Gastrocnemius medialis (tissue), 4 donors: ENCODE measurements at regions of chr5 and their contacts with region 1.

Region 1: DNA sequence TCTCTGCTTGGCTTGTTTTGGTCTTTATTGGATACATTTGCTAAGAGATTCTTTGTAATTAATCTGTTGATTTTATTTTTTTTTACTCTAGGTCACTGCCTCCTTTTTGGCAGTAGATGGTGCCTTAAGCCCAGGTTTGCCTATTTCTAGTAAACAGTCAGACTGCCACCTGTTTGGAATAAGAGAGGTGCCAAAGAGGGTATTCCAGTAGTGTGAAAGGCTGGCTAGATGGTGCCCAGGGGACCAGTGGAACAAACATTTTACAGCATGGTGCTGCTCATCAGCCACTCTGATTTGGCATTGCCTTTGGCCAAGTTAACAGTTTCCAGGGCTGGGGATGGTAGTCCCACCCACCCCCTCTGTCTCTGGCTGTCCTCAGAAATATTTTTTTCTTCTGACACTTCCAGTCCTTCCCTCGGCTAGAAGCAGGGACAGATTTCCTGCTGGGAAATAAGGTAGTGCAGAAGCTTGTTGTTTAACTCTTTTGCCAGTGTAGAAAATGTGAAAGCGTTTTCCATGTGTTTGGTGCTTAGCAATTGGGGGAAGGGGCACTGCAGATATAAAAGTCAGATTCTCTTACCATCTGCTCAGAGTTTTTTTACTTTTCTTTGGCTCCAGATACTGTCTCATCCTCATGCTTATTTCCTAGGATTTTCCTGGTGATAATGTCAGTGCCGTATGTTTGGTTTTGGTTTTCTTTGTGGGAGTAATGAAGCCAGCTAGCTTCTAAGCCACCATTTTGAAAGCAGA is 36.6 kb upstream of the FBXL7 start:
- DNase-seq: no peak
- ATAC-seq: no peak
- H3K4me3 ChIP-seq: no peak overlapping the region
- H3K27ac ChIP-seq: no peak overlapping the region
- H3K4me1 ChIP-seq: no peaks in the 10 kb centered on the region
- H3K27me3 ChIP-seq: no peaks in the 10 kb centered on the region
- CTCF ChIP-seq: peak in 2 of 5 experiments; percentile 4 to 28
- POLR2A ChIP-seq: no peak

Region 2: DNA sequence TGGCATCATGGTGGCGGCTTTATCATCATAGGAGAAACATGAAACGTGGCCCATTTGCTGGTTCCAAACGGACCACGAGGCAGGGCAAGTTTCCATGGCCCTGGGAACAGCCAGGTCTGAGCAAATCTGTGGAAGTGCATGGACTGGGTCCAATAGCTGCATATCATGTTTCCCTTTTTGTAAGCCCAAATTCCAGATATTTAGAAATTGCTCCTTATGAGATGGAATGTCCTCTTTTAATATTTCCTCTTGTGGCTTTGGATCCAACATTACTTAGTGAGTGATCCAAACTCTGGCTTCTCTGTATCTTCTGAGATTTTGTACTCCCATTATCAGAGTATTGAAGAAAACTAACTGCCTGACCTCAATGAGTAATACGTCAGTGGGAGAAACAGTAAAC is 43.2 kb before region 1 on chr5:
- in situ Hi-C with region 1: no loop called
- intact Hi-C with region 1: no loop called
- DNase-seq: peak; percentile 44 to 63
- ATAC-seq: peak; percentile 62 to 67
- H3K4me3 ChIP-seq: no peak overlapping the region
- H3K27ac ChIP-seq: no peak overlapping the region
- H3K4me1 ChIP-seq: no peaks in the 10 kb centered on the region
- H3K27me3 ChIP-seq: no peaks in the 10 kb centered on the region
- CTCF ChIP-seq: no peak
- POLR2A ChIP-seq: no peak

Region 3: DNA sequence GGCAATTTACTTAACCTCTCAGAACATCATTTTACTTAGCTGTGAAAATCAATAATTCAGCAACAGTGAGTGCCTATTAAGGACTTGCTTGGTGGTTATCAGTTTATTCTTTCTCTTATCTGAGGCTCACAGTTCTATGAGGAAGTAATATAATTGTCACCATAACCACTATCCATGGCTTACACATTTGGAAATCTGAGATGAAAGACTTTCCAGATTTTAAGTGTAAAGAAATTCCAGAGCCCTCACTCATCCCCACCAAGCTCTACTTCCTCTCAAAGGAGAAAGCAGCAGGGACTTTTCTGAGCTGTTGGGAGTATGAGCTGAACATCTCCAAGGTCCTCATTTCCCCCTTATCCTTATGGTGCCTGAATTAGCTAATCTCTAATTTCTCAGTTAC is 358.1 kb after region 1 on chr5:
- in situ Hi-C with region 1: loop called in 1 of 4 experiments (anchors 10 kb)
- intact Hi-C with region 1: loop called (anchors 10 kb)
- DNase-seq: no peak
- ATAC-seq: no peak
- H3K4me3 ChIP-seq: no peak overlapping the region
- H3K27ac ChIP-seq: no peak overlapping the region
- H3K4me1 ChIP-seq: peaks cover 0 to 3% of the 10 kb centered on the region in 2 donors
- H3K27me3 ChIP-seq: no peaks in the 10 kb centered on the region
- CTCF ChIP-seq: no peak
- POLR2A ChIP-seq: no peak

Region 4: DNA sequence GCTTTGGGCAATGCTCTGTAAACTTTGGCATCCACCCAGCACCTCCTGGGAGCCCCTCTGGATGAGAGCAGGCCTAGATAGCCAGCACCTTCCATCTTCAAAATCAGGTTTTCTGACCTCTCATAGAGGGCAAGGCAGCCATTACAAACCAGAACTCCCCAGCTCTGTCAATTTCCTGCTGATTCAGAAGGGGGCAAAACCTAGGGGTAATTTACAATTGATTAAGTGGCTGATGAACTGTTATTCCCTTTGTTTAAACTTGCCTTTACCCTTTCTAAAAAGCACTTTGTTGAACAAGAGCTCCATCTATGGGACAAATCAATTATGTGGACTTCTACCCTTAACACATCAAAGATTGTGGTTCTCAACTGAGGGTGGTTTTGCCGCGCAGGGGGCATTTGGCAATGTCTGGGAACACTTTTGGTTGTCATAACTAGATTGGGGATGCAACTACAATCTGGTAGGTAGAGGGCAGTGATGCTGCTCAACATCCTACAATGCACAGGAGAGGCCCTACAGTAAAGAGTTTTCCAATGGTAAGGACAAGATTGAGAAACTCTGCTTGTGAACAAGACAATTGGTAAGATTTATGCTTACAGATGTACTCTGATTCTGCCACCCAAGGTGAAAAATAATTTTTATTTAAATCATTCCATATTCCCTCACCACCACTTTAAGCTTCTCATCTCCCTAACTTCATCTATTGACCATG is 532.1 kb after region 1 on chr5:
- in situ Hi-C with region 1: no loop called
- intact Hi-C with region 1: loop called (anchors 5 kb)
- DNase-seq: no peak
- ATAC-seq: no peak
- H3K4me3 ChIP-seq: no peak overlapping the region
- H3K27ac ChIP-seq: no peak overlapping the region
- H3K4me1 ChIP-seq: no peaks in the 10 kb centered on the region
- H3K27me3 ChIP-seq: no peaks in the 10 kb centered on the region
- CTCF ChIP-seq: peak in 2 of 5 experiments; percentile 30 to 39
- POLR2A ChIP-seq: no peak